CD8-positive, alpha-beta T cell (primary cell): ENCODE measurements at regions of chr20 and their contacts with region 1.

Region 1: GRCh38 chr20:53915446-53916172 is 154.8 kb downstream of the BCAS1 start:
- DNase-seq: peak; percentile 87 to 98 (median 95)
- ATAC-seq: peak; percentile 98
- H3K4me3 ChIP-seq: peak overlapping the region; percentile 76 to 81
- H3K4me3 Mint-ChIP-seq: peak overlapping the region; percentile 94
- H3K27ac ChIP-seq: peak overlapping the region; percentile 38 to 64
- H3K27ac Mint-ChIP-seq: peak overlapping the region; percentile 92
- H3K4me1 ChIP-seq: peaks cover 21% of the 10 kb centered on the region
- H3K4me1 Mint-ChIP-seq: peaks cover 26% of the 10 kb centered on the region
- H3K27me3 ChIP-seq: no peaks in the 10 kb centered on the region
- H3K27me3 Mint-ChIP-seq: no peaks in the 10 kb centered on the region
- CTCF ChIP-seq: peak; percentile 85

Region 2: GRCh38 chr20:53493311-53493864 is 422.2 kb before region 1 on chr20:
- CTCF ChIA-PET with region 1: no interaction called
- POLR2A ChIA-PET with region 1: no interaction called
- intact Hi-C with region 1: no loop called
- DNase-seq: no peak
- ATAC-seq: no peak
- H3K4me3 ChIP-seq: no peak overlapping the region
- H3K4me3 Mint-ChIP-seq: no peak overlapping the region
- H3K27ac ChIP-seq: no peak overlapping the region
- H3K27ac Mint-ChIP-seq: no peak overlapping the region
- H3K4me1 ChIP-seq: no peaks in the 10 kb centered on the region
- H3K4me1 Mint-ChIP-seq: no peaks in the 10 kb centered on the region
- H3K27me3 ChIP-seq: no peaks in the 10 kb centered on the region
- H3K27me3 Mint-ChIP-seq: peaks cover 11% of the 10 kb centered on the region
- CTCF ChIP-seq: no peak

Region 3: DNA sequence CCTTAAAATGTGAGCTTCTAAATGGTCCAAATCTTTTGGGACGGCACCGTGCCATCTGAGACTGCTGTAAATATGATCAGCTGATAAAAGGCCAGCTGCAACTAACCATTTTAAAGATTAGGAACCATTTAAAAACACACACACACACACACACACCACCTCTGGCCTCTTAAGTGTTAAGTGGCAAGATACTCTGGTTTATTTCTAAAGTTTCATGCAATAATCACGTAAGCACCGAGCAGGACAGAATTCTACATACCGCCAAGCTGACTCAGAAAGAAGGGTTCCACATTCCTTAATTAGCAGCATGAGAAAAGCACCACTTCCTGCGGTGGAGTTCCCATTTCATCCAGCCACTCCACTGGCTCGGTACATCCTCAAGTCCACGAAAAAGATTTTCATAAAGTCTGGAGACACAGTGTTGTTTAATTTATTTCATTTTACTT is 304.1 kb before region 1 on chr20:
- CTCF ChIA-PET with region 1: interaction called, 15 read pairs
- POLR2A ChIA-PET with region 1: interaction called, 4 read pairs
- intact Hi-C with region 1: no loop called
- DNase-seq: peak in 2 of 9 experiments; percentile 7 to 41
- ATAC-seq: no peak
- H3K4me3 ChIP-seq: no peak overlapping the region
- H3K4me3 Mint-ChIP-seq: no peak overlapping the region
- H3K27ac ChIP-seq: no peak overlapping the region
- H3K27ac Mint-ChIP-seq: peak overlapping the region; percentile 62
- H3K4me1 ChIP-seq: peaks cover 21% of the 10 kb centered on the region
- H3K4me1 Mint-ChIP-seq: peaks cover 35% of the 10 kb centered on the region
- H3K27me3 ChIP-seq: no peaks in the 10 kb centered on the region
- H3K27me3 Mint-ChIP-seq: no peaks in the 10 kb centered on the region
- CTCF ChIP-seq: no peak

Region 4: DNA sequence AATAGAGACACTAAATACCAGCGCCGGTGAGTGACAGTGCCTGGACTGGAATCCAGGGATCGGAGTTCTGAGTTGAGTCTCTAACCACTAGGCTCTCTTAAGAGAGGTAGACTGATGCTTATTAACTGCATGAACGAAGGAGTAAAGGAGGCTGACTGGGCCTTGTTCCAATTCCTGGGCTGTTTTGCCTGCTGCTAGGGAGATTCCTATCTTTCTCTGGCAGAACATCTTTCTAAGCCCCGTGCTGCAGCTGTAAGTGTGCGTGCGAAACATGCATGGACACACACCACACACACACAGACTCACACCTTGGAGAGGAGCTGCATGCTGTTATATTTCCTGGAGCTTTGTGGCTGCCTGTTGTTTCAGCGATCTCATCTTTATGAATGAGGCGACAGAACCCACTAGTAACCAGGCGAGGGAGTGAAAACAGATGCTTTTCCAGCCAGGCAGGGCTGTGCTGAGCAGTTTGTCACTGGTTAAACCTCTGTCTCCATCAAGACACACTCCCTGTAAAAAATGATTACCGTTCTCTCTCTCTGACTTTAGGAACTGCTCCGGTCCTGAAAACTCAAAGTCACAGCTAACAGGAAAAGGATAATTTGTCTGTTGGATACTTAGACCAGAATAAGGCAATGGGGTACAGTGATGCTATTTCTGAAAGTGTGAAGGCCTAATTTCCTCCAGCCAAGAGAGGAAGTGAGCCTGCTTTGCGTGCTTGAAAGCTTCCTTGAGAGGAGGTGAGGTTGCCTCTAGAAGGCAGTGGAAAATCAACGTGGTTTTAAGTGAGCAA is 164.6 kb before region 1 on chr20:
- CTCF ChIA-PET with region 1: interaction called, 18 read pairs
- POLR2A ChIA-PET with region 1: no interaction called
- intact Hi-C with region 1: loop called (anchors 5 kb)
- DNase-seq: peak in 8 of 9 experiments; percentile 6 to 79 (median 38)
- ATAC-seq: peak; percentile 56
- H3K4me3 ChIP-seq: no peak overlapping the region
- H3K4me3 Mint-ChIP-seq: peak overlapping the region; percentile 56
- H3K27ac ChIP-seq: peak overlapping the region; percentile 13 to 77
- H3K27ac Mint-ChIP-seq: peak overlapping the region; percentile 92
- H3K4me1 ChIP-seq: peaks cover 68% of the 10 kb centered on the region
- H3K4me1 Mint-ChIP-seq: peaks cover 70% of the 10 kb centered on the region
- H3K27me3 ChIP-seq: no peaks in the 10 kb centered on the region
- H3K27me3 Mint-ChIP-seq: no peaks in the 10 kb centered on the region
- CTCF ChIP-seq: no peak

Region 5: GRCh38 chr20:53869466-53870258 is 45.9 kb before region 1 on chr20:
- CTCF ChIA-PET with region 1: interaction called, 39 read pairs
- POLR2A ChIA-PET with region 1: interaction called, 28 read pairs
- intact Hi-C with region 1: loop called (anchors 1 to 2 kb)
- DNase-seq: peak; percentile 43 to 90 (median 74)
- ATAC-seq: peak; percentile 67
- H3K4me3 ChIP-seq: no peak overlapping the region
- H3K4me3 Mint-ChIP-seq: peak overlapping the region; percentile 33
- H3K27ac ChIP-seq: peak overlapping the region in 1 of 2 experiments; percentile 52
- H3K27ac Mint-ChIP-seq: peak overlapping the region; percentile 93
- H3K4me1 ChIP-seq: peaks cover 82% of the 10 kb centered on the region
- H3K4me1 Mint-ChIP-seq: peaks cover 75% of the 10 kb centered on the region
- H3K27me3 ChIP-seq: no peaks in the 10 kb centered on the region
- H3K27me3 Mint-ChIP-seq: no peaks in the 10 kb centered on the region
- CTCF ChIP-seq: peak; percentile 84

Region 6: DNA sequence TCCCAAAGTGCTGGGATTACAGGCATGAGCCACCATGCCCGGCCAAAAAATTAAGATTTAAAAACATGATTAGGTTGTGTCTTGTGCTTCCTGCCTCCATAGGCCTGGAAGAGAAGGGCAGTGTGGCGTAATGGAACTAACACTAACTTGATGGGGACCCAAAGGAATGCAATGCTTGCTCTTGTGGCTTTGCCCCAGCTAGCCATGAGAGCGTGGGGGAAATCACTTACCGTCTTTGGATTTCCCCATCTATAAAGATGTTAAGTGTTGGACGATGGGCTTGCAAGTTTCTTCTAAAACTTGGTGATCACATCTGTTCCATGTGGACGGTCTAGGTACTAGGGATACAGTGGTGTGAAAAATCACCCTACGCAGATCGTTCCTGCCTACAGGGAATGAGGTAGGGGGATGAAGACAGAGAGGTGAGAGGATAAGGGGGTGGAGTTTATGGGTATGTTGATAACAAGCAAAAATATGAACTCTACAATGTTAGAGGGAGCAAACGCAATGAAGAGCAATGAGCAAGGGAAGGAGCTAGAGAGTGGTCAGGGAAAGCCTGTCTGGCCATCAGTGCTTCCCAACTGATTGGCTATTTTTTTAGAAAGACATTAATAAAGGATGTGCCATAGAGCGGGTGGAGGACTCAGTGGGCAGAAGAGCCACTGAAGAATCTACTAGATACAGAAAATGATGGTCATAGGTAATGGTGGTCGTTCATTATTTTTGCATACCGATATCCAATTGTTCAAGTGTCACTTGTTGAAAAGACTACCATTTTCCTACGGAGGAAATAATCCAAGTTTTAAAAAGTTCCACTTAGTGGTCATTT is 10.4 kb before region 1 on chr20:
- CTCF ChIA-PET with region 1: interaction called, 61 read pairs
- POLR2A ChIA-PET with region 1: interaction called, 3 read pairs
- intact Hi-C with region 1: no loop called
- DNase-seq: no peak
- ATAC-seq: no peak
- H3K4me3 ChIP-seq: no peak overlapping the region
- H3K4me3 Mint-ChIP-seq: no peak overlapping the region
- H3K27ac ChIP-seq: no peak overlapping the region
- H3K27ac Mint-ChIP-seq: no peak overlapping the region
- H3K4me1 ChIP-seq: peaks cover 16% of the 10 kb centered on the region
- H3K4me1 Mint-ChIP-seq: peaks cover 27% of the 10 kb centered on the region
- H3K27me3 ChIP-seq: no peaks in the 10 kb centered on the region
- H3K27me3 Mint-ChIP-seq: no peaks in the 10 kb centered on the region
- CTCF ChIP-seq: no peak

Region 7: GRCh38 chr20:54062812-54063280 is 147.2 kb after region 1 on chr20:
- CTCF ChIA-PET with region 1: interaction called, 11 read pairs
- POLR2A ChIA-PET with region 1: no interaction called
- intact Hi-C with region 1: no loop called
- DNase-seq: peak in 2 of 9 experiments; percentile 40 to 60
- ATAC-seq: no peak
- H3K4me3 ChIP-seq: no peak overlapping the region
- H3K4me3 Mint-ChIP-seq: no peak overlapping the region
- H3K27ac ChIP-seq: no peak overlapping the region
- H3K27ac Mint-ChIP-seq: no peak overlapping the region
- H3K4me1 ChIP-seq: peaks cover 24% of the 10 kb centered on the region
- H3K4me1 Mint-ChIP-seq: no peaks in the 10 kb centered on the region
- H3K27me3 ChIP-seq: no peaks in the 10 kb centered on the region
- H3K27me3 Mint-ChIP-seq: no peaks in the 10 kb centered on the region
- CTCF ChIP-seq: peak; percentile 53

Region 8: DNA sequence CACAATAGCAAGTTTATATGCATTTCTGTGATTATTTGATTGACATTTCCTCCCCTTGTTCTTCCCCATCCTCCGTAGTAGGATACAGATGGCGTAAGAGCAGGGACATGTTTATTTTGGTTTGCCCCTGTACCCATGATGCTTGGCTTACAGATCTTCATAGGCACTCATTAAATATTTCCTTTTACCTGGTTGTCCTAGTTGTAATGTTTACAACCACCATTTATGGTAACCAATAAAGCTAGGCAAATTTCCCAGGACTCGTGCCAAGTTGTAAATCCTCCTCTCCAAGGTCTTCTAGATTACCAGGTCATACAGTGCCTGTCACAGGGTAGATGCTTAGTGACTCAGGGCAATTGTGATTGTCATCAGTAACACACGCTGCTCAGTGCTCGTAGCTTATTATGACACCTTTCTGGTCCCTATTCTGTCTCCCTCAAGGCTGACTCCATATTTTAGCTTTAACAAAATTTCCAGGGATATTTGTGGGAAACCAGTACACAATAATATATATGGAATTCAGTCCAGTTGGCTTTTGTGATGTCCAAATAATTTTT is 233.4 kb after region 1 on chr20:
- CTCF ChIA-PET with region 1: no interaction called
- POLR2A ChIA-PET with region 1: no interaction called
- intact Hi-C with region 1: no loop called
- DNase-seq: no peak
- ATAC-seq: no peak
- H3K4me3 ChIP-seq: no peak overlapping the region
- H3K4me3 Mint-ChIP-seq: no peak overlapping the region
- H3K27ac ChIP-seq: no peak overlapping the region
- H3K27ac Mint-ChIP-seq: no peak overlapping the region
- H3K4me1 ChIP-seq: no peaks in the 10 kb centered on the region
- H3K4me1 Mint-ChIP-seq: no peaks in the 10 kb centered on the region
- H3K27me3 ChIP-seq: no peaks in the 10 kb centered on the region
- H3K27me3 Mint-ChIP-seq: peaks cover 16% of the 10 kb centered on the region
- CTCF ChIP-seq: no peak